Head of caudate nucleus (tissue), 42 donors: ENCODE measurements at regions of chr16 and their contacts with region 1.

Region 1: DNA sequence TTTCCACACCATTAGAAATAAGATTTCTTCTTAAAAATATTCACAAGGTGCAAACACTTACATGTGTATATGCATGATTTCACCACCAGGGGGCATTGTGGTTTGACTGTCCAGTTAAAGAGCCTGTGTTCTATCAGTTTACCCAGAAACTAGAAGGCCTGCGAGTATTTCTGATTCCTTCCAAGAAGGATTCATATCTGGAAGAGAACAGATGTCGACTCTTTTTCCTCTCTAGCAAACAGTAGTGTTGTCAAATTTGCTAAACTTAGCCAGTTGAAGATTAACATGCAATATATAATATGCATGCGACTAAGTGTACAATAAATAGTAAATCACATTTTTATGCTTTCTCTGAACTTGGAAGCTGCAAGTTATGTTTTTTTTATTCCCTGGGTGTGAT is 404.1 kb downstream of the WWOX start:
- DNase-seq: peak in 35 of 42 donors; percentile 13 to 92 (median 68)

Region 2: GRCh38 chr16:78163772-78164670 is 339.6 kb before region 1 on chr16:
- intact Hi-C with region 1: no loop called
- DNase-seq: no peak

Region 3: GRCh38 chr16:78385086-78385805 is 118.4 kb before region 1 on chr16:
- intact Hi-C with region 1: no loop called
- DNase-seq: peak in 15 of 42 donors; percentile 11 to 61 (median 28)

Region 4: DNA sequence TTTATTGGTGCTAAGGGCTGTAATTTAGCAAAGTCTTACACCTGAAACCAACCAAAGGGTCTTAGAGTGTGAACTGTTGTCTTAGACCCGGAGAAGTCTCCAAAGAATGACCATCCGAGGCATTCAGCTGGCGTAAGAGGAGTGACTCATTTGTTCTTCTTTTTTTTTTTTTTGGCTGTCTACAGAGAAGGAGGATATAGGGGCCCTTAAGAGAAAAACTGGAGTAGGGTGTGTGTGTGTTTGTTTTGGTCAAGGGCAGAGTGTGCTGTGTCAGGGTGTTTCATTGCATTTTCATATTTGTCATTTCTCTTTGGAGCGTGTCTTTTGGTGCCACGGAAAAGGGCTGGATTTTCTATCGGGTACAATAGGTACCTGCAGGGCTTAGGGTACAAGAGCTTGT is 103.9 kb after region 1 on chr16:
- intact Hi-C with region 1: loop called (anchors 10 kb)
- DNase-seq: no peak

Region 5: DNA sequence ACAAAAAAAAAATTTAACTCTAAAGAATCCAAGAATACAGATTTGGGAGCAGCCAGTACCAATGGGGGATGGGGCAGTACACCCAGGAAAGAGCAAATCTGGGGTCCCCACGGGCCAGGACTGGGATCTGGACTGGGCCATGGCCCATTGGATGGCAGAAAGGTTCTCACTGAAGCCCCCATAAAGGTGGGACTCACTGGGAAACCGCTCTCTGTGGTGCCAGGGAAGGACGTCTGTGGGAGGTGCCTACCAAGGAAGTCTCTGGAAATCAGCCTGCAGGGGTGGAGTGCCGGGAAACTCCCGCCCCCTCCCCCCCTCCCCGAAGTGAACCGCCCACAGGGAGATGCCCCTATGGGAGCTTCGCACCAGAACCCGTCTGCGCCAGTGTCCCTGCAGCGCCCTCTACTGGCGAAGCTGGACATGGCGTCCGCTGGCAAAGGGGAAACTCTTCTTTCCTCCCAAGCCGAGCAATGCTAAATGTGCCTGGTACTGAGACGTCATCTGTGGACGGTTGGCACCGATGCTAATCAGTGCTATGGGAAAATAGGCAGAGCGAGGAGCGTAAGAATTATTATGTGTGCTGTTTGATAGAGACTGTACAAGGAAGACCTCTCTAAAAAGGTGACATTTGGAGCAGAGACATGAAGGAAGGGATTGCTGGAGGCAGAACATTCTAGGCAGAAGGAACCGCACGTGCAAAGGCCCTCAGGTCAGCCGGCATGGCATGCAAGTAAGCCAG is 266.9 kb after region 1 on chr16:
- intact Hi-C with region 1: loop called (anchors 5 kb)
- DNase-seq: peak; percentile 31 to 94 (median 80)